ENCODE measurements at regions of chr2 and their contacts with region 1.

Region 1: GRCh38 chr2:84925724-84926376 is 20.4 kb downstream of the TMSB10 start:
- H3K4me3 ChIP-seq: peak overlapping the region; percentile 20
- H3K27ac ChIP-seq: no peak overlapping the region
- H3K4me1 ChIP-seq: no peaks in the 10 kb centered on the region
- CTCF ChIP-seq: peak; percentile 99

Region 2: GRCh38 chr2:84716564-84716963 is 209.3 kb before region 1 on chr2:
- CTCF ChIA-PET with region 1: no interaction called
- POLR2A ChIA-PET with region 1: no interaction called
- H3K4me3 ChIP-seq: no peak overlapping the region
- H3K27ac ChIP-seq: no peak overlapping the region
- H3K4me1 ChIP-seq: 0 out of 2 replicates have a peak, but pooled peaks cover 2% of the 10 kb centered on the region
- CTCF ChIP-seq: no peak

Region 3: DNA sequence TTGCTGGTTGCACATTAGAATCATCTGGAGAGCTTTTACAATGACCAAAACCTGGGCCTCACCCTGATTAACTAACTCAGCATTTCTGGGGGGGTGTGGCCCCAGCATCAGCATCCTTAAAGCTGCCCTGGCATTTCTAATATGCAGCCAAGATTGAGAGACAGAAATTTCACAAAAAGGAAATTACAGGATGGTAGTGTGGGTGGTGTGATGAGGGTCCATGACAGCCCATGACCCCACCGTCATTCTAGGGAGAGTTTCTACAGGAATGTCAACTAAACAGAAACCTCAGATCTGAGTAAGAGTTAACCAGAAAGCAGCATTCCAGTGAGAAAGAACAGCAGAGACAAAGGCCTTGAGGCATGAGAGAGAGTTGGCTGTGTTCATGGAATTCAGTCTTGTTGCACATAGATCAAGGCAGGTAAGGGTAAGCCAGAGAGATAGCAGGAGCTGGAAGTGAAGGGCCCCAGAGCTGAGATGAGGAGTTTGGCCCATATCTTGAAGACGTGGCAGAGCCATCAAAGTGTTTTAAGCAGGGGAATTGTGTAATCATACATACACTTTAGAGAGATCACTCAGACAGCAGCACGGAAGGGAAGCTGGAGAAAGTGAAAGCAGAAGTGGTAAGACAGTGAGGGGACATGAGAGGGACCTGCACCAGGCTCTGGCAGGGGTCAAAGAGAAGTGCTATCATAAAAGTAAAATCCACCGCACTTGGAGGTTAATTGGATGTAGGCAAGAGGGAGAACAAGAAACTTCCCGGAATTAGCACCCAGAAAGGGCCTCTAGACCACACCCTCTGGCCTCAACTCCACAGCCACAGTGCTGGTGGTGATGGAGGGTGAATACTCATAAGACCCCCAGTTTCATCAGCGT is 37.2 kb before region 1 on chr2:
- CTCF ChIA-PET with region 1: interaction called, 24 read pairs
- POLR2A ChIA-PET with region 1: no interaction called
- H3K4me3 ChIP-seq: no peak overlapping the region
- H3K27ac ChIP-seq: no peak overlapping the region
- H3K4me1 ChIP-seq: no peaks in the 10 kb centered on the region
- CTCF ChIP-seq: no peak

Region 4: GRCh38 chr2:84912984-84913383 is 12.9 kb before region 1 on chr2:
- CTCF ChIA-PET with region 1: interaction called, 10 read pairs
- POLR2A ChIA-PET with region 1: interaction called, 38 read pairs
- H3K4me3 ChIP-seq: no peak overlapping the region
- H3K27ac ChIP-seq: no peak overlapping the region
- H3K4me1 ChIP-seq: no peaks in the 10 kb centered on the region
- CTCF ChIP-seq: no peak

Region 5: GRCh38 chr2:84958135-84959044 is 32.5 kb after region 1 on chr2:
- CTCF ChIA-PET with region 1: interaction called, 14 read pairs
- POLR2A ChIA-PET with region 1: interaction called, 13 read pairs
- H3K4me3 ChIP-seq: no peak overlapping the region
- H3K27ac ChIP-seq: peak overlapping the region; percentile 59
- H3K4me1 ChIP-seq: peaks cover 27% of the 10 kb centered on the region
- CTCF ChIP-seq: no peak

Region 6: DNA sequence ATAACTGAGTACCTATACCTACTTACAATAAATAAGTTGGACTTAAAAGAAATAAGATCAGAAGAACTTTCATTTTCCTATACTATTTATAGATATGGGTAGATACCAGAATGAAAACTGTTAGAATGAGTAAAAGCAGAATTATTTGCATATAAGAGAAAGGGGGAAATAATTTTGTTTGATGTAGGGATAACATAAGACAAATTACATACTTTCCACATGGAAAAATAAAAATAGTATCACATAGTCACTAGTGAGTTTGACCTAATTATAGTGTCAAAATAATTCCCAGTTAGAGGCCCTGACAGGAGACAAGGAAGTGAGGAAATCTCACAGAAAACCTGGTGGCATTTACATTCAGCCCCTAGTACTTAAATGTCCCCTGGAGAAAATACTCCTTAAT is 73.7 kb after region 1 on chr2:
- CTCF ChIA-PET with region 1: interaction called, 20 read pairs
- POLR2A ChIA-PET with region 1: no interaction called
- H3K4me3 ChIP-seq: no peak overlapping the region
- H3K27ac ChIP-seq: no peak overlapping the region
- H3K4me1 ChIP-seq: peaks cover 10% of the 10 kb centered on the region; the same call in 1 of the 2 replicates
- CTCF ChIP-seq: no peak

Region 7: DNA sequence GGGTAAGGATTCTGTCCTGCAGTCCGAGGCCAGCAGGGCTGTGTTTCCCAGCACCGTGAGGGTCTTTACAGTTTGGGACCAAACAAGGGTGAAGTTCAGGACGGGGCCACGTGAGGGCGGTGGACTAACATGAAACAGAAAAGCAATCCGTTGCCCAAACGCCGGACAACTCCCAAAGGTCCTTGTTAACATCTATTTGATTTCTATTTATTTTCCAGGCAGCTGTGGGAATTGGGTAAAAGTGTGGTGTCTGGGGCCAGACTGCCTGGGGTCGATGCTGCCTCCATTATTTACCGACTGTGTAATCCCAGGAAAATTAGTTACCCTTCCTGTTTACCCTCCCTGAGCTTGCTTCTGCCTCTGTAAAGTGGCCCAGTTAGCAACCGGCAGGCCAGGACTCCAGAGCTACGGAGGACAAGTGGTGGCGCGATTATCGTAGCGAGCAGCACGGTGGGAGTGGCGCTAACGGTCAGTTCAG is 141.1 kb after region 1 on chr2:
- CTCF ChIA-PET with region 1: interaction called, 22 read pairs
- POLR2A ChIA-PET with region 1: no interaction called
- H3K4me3 ChIP-seq: no peak overlapping the region
- H3K27ac ChIP-seq: no peak overlapping the region
- H3K4me1 ChIP-seq: no peaks in the 10 kb centered on the region
- CTCF ChIP-seq: peak; percentile 51

Region 8: GRCh38 chr2:85259879-85260278 is 334.0 kb after region 1 on chr2:
- CTCF ChIA-PET with region 1: no interaction called
- POLR2A ChIA-PET with region 1: no interaction called
- H3K4me3 ChIP-seq: no peak overlapping the region
- H3K27ac ChIP-seq: no peak overlapping the region
- H3K4me1 ChIP-seq: no peaks in the 10 kb centered on the region
- CTCF ChIP-seq: no peak